ENCODE measurements at regions of chr12 and their contacts with region 1.

Region 1: DNA sequence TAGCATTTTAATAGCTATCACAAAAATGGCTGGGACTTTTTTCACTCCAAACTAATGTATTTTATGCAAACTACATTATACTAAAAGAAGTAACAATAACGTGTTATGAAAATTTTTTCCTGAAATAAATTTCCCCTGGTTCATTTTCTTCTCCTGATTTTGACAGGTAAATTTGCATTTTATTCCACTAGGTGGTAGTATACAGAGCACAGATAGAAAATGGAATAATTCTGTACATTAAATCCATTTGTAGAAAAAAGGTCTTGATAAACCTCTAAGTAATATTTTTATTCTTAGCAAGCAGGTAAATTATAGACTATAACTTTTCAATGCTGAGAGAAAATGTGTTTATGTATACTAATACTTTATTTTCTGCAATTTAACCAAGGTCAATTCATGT is 96.5 kb downstream of the BCAT1 start:
- DNase-seq: no peak
- ATAC-seq: no peak
- H3K4me3 Mint-ChIP-seq: no peak overlapping the region
- H3K27ac Mint-ChIP-seq: no peak overlapping the region
- H3K4me1 Mint-ChIP-seq: peaks cover 14% of the 10 kb centered on the region
- H3K27me3 Mint-ChIP-seq: no peaks in the 10 kb centered on the region
- CTCF ChIP-seq: no peak

Region 2: DNA sequence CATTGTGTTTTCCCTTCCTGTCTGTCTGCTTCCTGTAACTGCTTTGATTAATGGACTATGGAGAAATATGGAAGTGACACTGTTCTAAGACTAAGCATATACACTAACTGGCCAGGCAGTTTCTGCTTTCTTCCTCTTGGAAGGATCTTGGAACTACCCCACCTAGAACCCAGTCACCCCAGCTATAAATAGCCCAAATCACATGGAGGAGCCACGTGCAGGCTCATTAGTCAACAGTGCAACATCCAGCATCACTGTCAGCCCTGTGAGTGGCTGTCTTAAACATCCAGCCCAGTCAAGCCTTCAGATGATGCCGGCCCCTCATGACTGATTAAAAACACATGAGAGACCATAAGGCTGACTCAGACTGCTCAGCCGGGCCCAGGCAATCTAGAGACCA is 57.2 kb after region 1 on chr12:
- CTCF ChIA-PET with region 1: no interaction called
- POLR2A ChIA-PET with region 1: no interaction called
- intact Hi-C with region 1: no loop called
- DNase-seq: no peak
- ATAC-seq: no peak
- H3K4me3 Mint-ChIP-seq: no peak overlapping the region
- H3K27ac Mint-ChIP-seq: no peak overlapping the region
- H3K4me1 Mint-ChIP-seq: peaks cover 2% of the 10 kb centered on the region
- H3K27me3 Mint-ChIP-seq: no peaks in the 10 kb centered on the region
- CTCF ChIP-seq: no peak

Region 3: DNA sequence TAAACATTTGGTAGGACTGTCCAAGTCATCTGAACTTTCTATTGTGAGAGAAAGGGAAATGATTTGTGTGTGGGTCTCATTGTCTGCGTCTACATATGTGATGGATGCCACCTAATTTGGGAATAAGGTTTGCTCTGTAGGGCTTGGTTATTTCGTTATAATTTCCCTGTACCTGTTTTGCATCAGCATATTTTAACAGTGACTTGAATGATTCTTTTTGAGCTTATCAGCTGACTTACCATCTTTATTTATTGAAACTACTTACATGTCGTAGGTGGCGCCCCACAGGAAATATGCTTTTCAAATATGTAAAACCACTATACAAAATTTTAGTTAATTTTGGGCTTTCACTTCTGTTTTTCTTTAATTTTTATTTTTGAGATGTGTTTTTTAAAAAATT is 153.0 kb after region 1 on chr12:
- CTCF ChIA-PET with region 1: no interaction called
- POLR2A ChIA-PET with region 1: interaction called, 12 read pairs
- intact Hi-C with region 1: no loop called
- DNase-seq: no peak
- ATAC-seq: peak; percentile 65
- H3K4me3 Mint-ChIP-seq: peak overlapping the region; percentile 66
- H3K27ac Mint-ChIP-seq: peak overlapping the region; percentile 86
- H3K4me1 Mint-ChIP-seq: peaks cover 74% of the 10 kb centered on the region
- H3K27me3 Mint-ChIP-seq: no peaks in the 10 kb centered on the region
- CTCF ChIP-seq: no peak